ENCODE measurements at regions of chr14 and their contacts with region 1.

Region 1: DNA sequence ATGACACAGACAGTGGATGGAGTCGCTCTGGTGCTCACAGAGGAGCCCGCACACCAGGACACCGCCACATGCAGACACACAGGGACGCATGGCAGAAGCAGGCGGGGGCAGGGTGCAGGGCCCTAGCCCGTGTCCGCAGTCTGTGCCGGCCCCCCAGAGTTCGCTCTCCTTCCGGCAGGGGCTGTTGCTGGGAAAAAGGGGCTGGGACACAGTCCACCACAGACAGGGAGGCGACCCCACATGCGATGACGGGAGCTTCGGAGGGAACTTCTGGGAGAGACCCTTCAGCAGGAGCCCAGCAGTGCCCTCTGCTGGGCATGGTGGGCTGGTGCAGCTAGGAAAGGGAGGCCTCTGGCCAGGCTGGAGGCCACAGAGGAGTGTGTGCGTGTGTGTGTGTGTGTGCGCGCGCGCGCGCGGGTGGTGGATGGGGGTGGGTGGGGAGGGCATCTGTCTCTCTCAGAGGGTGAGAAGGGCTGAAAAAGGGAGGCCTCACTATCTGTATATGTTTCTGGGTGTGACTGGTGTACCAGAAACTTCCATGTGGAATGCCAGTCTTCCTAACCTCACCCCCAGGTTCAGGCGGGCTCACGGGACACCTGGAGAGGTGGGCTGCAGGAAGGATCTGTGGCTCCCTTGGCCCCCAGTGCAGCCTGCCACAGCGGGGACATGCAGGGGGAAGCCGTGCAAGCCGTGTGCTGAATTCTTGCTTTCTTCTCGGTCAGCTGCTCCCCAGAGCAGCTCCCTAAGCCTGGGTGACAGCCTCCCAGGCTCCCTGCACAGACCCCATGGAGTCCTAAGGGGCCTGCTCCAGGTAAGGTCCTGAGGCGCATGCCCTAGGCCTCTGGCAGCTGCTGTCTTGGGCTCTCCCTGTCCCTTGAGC is 60.7 kb downstream of the PLEKHG3 start:
- DNase-seq: peak; percentile 85

Region 2: GRCh38 chr14:64671591-64671990 is 93.3 kb before region 1 on chr14:
- intact Hi-C with region 1: loop called (anchors 2 kb)
- DNase-seq: no peak